Activated naive CD4-positive, alpha-beta T cell treated with anti-CD3 and anti-CD28 coated beads for 36 hours (primary cell): ENCODE measurements at regions of chr1 and their contacts with region 1.

Region 1: DNA sequence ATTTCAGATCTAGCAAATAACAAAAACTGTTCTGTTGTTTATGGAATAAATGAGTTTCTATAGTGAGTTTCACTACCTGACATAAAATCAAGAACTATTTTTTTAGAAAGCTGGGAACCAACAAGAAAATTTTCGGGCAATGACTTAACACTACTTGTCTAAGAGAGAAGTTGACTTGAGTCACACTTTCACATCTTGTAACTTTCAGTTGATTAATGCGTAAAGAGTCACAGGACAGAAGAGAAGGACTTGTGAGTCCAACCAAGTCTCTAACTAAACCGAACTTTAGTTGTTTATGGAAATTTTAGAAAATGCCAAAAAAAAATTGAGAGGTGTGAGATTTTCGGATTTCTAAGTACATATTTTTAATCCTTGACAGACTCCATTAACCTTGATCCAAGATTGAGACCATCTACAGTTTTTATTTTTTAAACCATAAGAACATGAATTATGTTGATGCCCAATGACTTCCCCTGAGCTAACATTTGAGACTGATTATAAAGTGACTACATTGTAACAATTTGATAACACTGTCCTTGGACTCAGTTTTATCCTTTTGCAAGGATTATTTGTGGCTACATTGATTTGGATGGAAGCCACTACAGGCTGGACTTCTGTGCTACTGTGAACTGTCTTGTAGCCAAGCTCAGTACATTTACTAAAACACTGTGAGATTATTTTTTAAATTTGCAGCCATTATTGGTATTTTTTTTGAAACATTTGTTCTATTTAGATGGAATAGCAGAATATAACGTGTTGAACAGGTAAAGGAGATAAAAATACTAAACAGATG is 284.0 kb downstream of the PTPRC start:
- DNase-seq: no peak
- H3K4me3 Mint-ChIP-seq: no peak overlapping the region
- H3K27ac Mint-ChIP-seq: peak overlapping the region; percentile 79
- H3K4me1 Mint-ChIP-seq: peaks cover 71% of the 10 kb centered on the region
- H3K27me3 Mint-ChIP-seq: no peaks in the 10 kb centered on the region

Region 2: DNA sequence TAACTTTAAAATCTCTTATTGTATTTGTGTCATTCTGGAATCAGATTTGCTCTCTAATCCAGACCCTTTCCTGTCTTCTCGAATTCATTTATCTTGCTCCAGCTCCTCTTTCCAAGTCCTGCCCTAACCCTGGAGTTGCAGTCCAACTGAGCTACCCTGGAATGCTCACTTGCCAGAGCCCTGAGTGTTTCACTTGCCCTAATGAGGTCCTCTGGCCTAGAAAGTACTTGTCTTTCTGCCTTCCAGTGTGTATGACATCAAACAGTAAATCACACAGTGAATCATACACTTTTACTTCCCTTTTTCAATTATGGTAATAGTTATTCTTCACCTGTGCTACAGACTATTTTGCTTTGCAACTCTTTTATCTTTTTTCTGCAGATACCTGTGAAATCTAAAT is 669.2 kb before region 1 on chr1:
- CTCF ChIA-PET with region 1: no interaction called
- intact Hi-C with region 1: loop called (anchors 5 kb)
- DNase-seq: no peak
- H3K4me3 Mint-ChIP-seq: no peak overlapping the region
- H3K27ac Mint-ChIP-seq: no peak overlapping the region
- H3K4me1 Mint-ChIP-seq: peaks cover 46% of the 10 kb centered on the region
- H3K27me3 Mint-ChIP-seq: no peaks in the 10 kb centered on the region

Region 3: GRCh38 chr1:198907423-198907746 is 15.4 kb before region 1 on chr1:
- CTCF ChIA-PET with region 1: interaction called, 4 read pairs
- intact Hi-C with region 1: loop called (anchors 1 kb)
- DNase-seq: no peak
- H3K4me3 Mint-ChIP-seq: peak overlapping the region; percentile 20
- H3K27ac Mint-ChIP-seq: no peak overlapping the region
- H3K4me1 Mint-ChIP-seq: peaks cover 34% of the 10 kb centered on the region
- H3K27me3 Mint-ChIP-seq: no peaks in the 10 kb centered on the region

Region 4: DNA sequence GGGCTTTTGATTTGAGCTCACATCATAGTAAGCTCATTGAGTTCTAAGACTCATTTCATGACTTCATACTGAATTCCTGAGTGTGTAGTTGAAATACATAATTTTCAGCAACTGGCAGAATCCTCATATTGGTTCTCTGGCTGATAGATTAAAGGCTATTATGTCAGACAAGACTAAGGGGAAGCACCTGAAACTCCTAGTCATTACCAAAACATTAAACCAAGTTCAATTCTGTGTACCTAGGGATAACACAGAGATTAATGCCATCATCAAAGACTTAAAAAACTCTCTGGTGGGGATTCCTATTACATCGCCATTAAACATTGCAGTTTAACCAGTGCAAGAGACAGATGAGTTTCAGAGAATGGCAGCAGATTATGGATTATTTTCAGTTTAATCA is 55.1 kb after region 1 on chr1:
- CTCF ChIA-PET with region 1: no interaction called
- intact Hi-C with region 1: no loop called
- DNase-seq: no peak
- H3K4me3 Mint-ChIP-seq: no peak overlapping the region
- H3K27ac Mint-ChIP-seq: no peak overlapping the region
- H3K4me1 Mint-ChIP-seq: peaks cover 18% of the 10 kb centered on the region
- H3K27me3 Mint-ChIP-seq: no peaks in the 10 kb centered on the region

Region 5: DNA sequence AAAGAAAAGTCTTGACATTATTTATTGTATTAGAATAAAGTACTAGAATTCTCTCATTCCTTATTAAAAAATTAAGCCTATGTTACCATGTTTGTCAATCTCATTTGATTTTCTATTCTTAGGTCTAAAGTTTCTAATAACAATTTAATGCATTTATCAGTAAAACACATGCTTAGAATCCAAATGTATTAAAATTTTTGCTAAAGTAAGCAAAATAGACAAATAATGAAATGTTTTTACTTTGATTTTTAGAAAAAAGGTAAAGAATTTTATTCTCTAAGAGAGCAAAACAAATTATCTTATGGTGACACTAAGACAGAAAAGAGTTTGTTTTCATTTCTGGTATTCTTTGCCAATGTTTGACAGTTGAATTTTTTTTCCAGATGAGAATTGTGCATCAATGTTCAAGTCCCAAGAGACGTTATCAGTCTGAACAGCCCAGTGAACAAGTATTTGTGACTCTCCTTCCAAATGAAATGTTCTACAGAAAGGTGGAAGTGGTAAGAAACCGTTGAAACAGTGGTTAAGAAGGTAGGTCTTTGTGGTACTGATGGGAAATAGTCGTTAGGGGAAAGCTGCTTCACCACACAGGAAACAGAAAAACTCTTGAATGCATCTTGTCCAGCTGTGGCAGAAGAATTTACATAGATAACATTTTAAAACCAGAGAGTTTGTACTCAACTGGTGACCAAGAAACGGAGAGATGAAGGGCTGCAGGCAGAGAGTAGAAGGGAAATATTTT is 118.5 kb after region 1 on chr1:
- CTCF ChIA-PET with region 1: interaction called, 3 read pairs
- intact Hi-C with region 1: loop called (anchors 2 kb)
- DNase-seq: peak; percentile 34
- H3K4me3 Mint-ChIP-seq: peak overlapping the region; percentile 10
- H3K27ac Mint-ChIP-seq: peak overlapping the region; percentile 38
- H3K4me1 Mint-ChIP-seq: peaks cover 20% of the 10 kb centered on the region
- H3K27me3 Mint-ChIP-seq: no peaks in the 10 kb centered on the region

Region 6: GRCh38 chr1:199308331-199308846 is 385.6 kb after region 1 on chr1:
- CTCF ChIA-PET with region 1: no interaction called
- intact Hi-C with region 1: loop called (anchors 1 kb)
- DNase-seq: no peak
- H3K4me3 Mint-ChIP-seq: no peak overlapping the region
- H3K27ac Mint-ChIP-seq: peak overlapping the region; percentile 51
- H3K4me1 Mint-ChIP-seq: peaks cover 31% of the 10 kb centered on the region
- H3K27me3 Mint-ChIP-seq: peaks cover 25% of the 10 kb centered on the region